ENCODE measurements at regions of chr14 and their contacts with region 1.

Region 1: GRCh38 chr14:73568381-73568781 is 632 bp upstream of the ACOT2 start:
- DNase-seq: peak; percentile 50
- H3K4me3 ChIP-seq: peak overlapping the region; percentile 40 to 60 (median 56)
- H3K27ac ChIP-seq: peak overlapping the region; percentile 65
- H3K4me1 ChIP-seq: peaks cover 22% of the 10 kb centered on the region
- H3K27me3 ChIP-seq: no peaks in the 10 kb centered on the region
- CTCF ChIP-seq: no peak

Region 2: GRCh38 chr14:73616831-73617230 is 48.5 kb after region 1 on chr14:
- CTCF ChIA-PET with region 1: interaction called, 4 read pairs
- dilution Hi-C with region 1: loop called (anchors 5 kb)
- in situ Hi-C with region 1: no loop called
- intact Hi-C with region 1: no loop called
- DNase-seq: no peak
- H3K4me3 ChIP-seq: no peak overlapping the region
- H3K27ac ChIP-seq: no peak overlapping the region
- H3K4me1 ChIP-seq: peaks cover 14% of the 10 kb centered on the region
- H3K27me3 ChIP-seq: no peaks in the 10 kb centered on the region
- CTCF ChIP-seq: no peak

Measured in mammary epithelial cell (primary cell).